ENCODE measurements at regions of chr7 and their contacts with region 1.

Region 1: DNA sequence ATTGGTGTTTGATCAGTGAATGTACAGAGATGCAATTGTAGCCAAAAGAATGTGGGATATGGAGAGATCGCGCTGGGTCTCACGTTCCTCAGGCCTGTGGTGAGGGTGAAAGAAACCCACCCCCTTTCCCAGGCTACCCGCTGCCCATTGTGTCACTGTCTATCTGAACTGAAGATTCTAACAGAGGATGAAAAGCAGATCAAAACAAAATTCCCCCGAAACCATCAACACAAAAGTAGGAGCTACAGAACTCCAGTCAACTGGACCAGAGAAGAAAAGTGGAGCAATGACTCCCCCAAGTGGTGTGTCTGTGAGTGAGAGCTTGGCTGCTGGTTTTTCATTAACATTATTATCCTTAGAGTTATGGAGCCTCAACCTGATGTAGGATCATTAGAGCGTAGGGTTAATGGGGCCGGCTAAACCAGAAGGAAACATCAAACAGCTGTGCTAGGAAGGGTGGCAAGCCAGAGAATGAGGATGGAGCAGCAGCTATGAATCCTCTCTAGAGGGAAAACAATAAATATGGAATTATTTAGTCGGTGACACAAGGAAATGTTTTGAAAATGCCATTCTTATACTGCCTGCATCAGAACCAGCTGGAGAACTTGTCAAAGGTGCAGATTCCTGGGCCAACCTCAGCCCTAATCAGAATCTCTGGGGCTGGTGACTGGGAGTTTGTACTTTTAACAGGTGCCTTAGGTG is 38.3 kb downstream of the AKR1B1 start:
- DNase-seq: peak; percentile 88 to 92
- ATAC-seq: peak; percentile 78 to 86
- H3K4me3 ChIP-seq: no peak overlapping the region
- H3K27ac ChIP-seq: peak overlapping the region; percentile 79 to 87
- H3K4me1 ChIP-seq: peaks cover 64% of the 10 kb centered on the region
- CTCF ChIP-seq: peak; percentile 99
- EP300 ChIP-seq: no peak
- POLR2A ChIP-seq: no peak
- RAD21 ChIP-seq: peak; percentile 99 to 100

Region 2: DNA sequence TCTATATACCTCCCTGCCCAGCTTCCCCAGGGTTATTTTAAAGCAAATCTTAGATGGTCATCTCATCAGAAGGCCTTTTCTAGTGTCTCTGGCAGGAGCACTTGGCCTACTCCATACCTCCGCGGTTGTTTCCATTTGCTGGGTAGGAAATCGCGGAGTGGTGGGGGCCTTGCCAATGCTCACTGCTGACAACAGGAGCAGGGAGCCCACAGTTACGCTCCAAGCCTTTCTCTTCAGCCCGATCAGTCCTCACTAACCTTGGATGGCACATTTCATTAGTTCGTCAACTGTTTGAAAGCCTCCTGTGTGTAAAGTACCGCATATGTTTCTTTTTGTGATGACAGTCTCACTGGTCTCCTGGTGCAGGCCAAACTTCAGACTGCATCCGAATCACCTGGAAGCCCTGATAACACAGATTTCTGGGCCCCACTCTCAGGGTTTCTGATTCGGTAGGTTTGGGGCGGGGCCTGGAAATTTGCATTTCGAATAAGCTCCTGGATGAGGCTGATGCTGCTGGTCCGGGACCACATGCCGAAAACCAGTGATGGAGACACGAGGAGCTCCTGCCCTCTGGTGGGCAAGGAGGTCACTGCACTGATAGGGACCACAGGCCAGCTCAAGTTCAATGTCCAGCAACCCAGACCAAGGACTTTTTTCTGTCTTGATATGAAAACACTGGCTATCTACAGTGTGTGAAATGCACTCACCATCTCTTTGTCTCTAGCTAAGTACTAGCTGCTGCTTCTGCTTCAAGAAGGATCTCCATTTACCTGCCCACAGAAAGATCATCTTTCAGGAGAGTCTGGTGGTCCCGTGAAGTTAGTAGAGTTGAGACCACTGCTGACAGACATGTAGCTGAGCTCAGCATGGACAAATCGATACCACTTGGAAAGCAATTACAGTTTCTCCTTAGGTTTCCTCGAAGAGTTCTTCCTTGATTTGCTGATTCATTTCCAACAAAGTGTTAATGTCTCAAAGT is 279.4 kb before region 1 on chr7:
- CTCF ChIA-PET with region 1: interaction called, 30 read pairs
- POLR2A ChIA-PET with region 1: no interaction called
- DNase-seq: peak; percentile 77 to 93
- ATAC-seq: peak; percentile 97 to 98
- H3K4me3 ChIP-seq: no peak overlapping the region
- H3K27ac ChIP-seq: no peak overlapping the region
- H3K4me1 ChIP-seq: peaks cover 4% of the 10 kb centered on the region; the same call in 2 of the 3 replicates
- CTCF ChIP-seq: peak; percentile 92
- EP300 ChIP-seq: no peak
- POLR2A ChIP-seq: no peak
- RAD21 ChIP-seq: peak; percentile 89 to 90

Region 3: GRCh38 chr7:134316539-134317344 is 103.8 kb before region 1 on chr7 and contains the start of gene SLC35B4:
- CTCF ChIA-PET with region 1: interaction called, 8 read pairs
- POLR2A ChIA-PET with region 1: interaction called, 20 read pairs
- DNase-seq: peak; percentile 99 to 100
- ATAC-seq: peak; percentile 98 to 100
- H3K4me3 ChIP-seq: peak within 1 kb of the TSS; percentile 74
- H3K27ac ChIP-seq: peak within 1 kb of the TSS; percentile 90 to 92
- H3K4me1 ChIP-seq: peaks cover 14% of the 10 kb centered on the region
- CTCF ChIP-seq: no peak
- EP300 ChIP-seq: no peak
- POLR2A ChIP-seq: peak; percentile 53
- RAD21 ChIP-seq: no peak
- polyA plus RNA-seq, gene SLC35B4: 73.0 and 83.9 TPM in 2 replicates

Region 4: GRCh38 chr7:134368851-134369552 is 51.6 kb before region 1 on chr7:
- CTCF ChIA-PET with region 1: interaction called, 140 read pairs
- POLR2A ChIA-PET with region 1: interaction called, 7 read pairs
- DNase-seq: peak; percentile 81 to 97
- ATAC-seq: peak; percentile 45 to 81
- H3K4me3 ChIP-seq: no peak overlapping the region
- H3K27ac ChIP-seq: peak overlapping the region; percentile 89 to 90
- H3K4me1 ChIP-seq: peaks cover 61% of the 10 kb centered on the region
- CTCF ChIP-seq: no peak
- EP300 ChIP-seq: peak; percentile 96 to 97
- POLR2A ChIP-seq: no peak
- RAD21 ChIP-seq: peak in 1 of 2 experiments; percentile 69; a peak in 4 of 5 replicates

Region 5: GRCh38 chr7:134443396-134444070 is 23.0 kb after region 1 on chr7:
- CTCF ChIA-PET with region 1: interaction called, 14 read pairs
- POLR2A ChIA-PET with region 1: no interaction called
- DNase-seq: no peak
- ATAC-seq: no peak
- H3K4me3 ChIP-seq: no peak overlapping the region
- H3K27ac ChIP-seq: peak overlapping the region; percentile 5 to 94; a peak in 4 of 6 replicates
- H3K4me1 ChIP-seq: peaks cover 44% of the 10 kb centered on the region
- CTCF ChIP-seq: no peak
- EP300 ChIP-seq: no peak
- POLR2A ChIP-seq: no peak
- RAD21 ChIP-seq: no peak

Region 6: GRCh38 chr7:134632937-134633540 is 212.5 kb after region 1 on chr7:
- CTCF ChIA-PET with region 1: interaction called, 10 read pairs
- POLR2A ChIA-PET with region 1: no interaction called
- DNase-seq: peak; percentile 67 to 73
- ATAC-seq: peak; percentile 78 to 94; a peak in 5 of 6 replicates
- H3K4me3 ChIP-seq: no peak overlapping the region
- H3K27ac ChIP-seq: no peak overlapping the region
- H3K4me1 ChIP-seq: no peaks in the 10 kb centered on the region
- CTCF ChIP-seq: peak; percentile 89
- EP300 ChIP-seq: no peak
- POLR2A ChIP-seq: no peak
- RAD21 ChIP-seq: peak; percentile 89 to 95

Measured in A549 (cell line).